Activated CD4-positive, alpha-beta memory T cell treated with anti-CD3 and anti-CD28 coated beads, Interleukin-2, amount 10 ng/mL, durations not matched to agents 7 days and 5 days (primary cell): ENCODE measurements at regions of chr11 and their contacts with region 1.

Region 1: GRCh38 chr11:35138943-35139721 is at the start of gene CD44:
- DNase-seq: peak; percentile 75
- H3K4me3 Mint-ChIP-seq: peak within 1 kb of the TSS; percentile 97
- H3K27ac Mint-ChIP-seq: peak within 1 kb of the TSS; percentile 90
- H3K4me1 Mint-ChIP-seq: peaks cover 45% of the 10 kb centered on the region
- H3K27me3 Mint-ChIP-seq: peaks cover 10% of the 10 kb centered on the region
- total RNA-seq, gene CD44: 634 to 645 TPM

Region 2: GRCh38 chr11:34997952-34998528 is 141.1 kb before region 1 on chr11:
- CTCF ChIA-PET with region 1: interaction called, 3 read pairs
- POLR2A ChIA-PET with region 1: interaction called, 15 read pairs
- DNase-seq: no peak
- H3K4me3 Mint-ChIP-seq: no peak overlapping the region
- H3K27ac Mint-ChIP-seq: peak overlapping the region; percentile 37
- H3K4me1 Mint-ChIP-seq: peaks cover 25% of the 10 kb centered on the region
- H3K27me3 Mint-ChIP-seq: no peaks in the 10 kb centered on the region

Region 3: DNA sequence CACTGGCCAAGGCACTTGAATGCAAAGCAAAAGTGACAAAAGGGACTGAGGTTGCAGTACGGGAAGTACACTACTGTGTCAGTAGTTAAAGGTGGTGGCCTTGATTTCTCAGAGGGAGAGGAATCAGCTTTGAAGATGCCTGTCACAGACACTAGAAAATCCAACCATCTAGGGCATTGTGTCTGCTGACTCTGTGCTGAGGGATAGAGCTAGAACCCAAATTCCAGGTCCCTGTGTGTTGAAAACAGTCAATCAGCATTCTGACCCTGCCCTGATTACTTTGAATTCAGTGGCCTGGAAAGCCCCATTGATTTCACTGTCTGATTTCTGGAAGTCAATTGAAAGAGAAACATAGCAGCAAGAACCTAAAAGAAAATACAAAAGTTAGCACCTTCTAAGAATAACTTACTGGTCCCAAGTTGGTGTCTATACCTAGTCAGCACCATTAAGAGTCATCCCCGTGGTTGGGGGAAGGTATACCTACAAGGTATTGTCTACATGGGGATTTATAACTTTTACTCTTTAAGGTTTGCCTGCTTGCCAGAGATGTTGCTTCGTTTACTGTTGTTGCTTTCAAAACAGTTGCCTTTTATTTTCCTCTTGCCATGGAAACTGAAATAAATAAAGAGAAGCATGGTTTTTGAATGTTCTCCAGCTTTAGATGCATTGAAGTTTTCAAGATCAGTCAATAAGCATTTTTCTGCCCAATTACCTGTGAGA is 125.5 kb before region 1 on chr11:
- CTCF ChIA-PET with region 1: interaction called, 3 read pairs
- POLR2A ChIA-PET with region 1: interaction called, 17 read pairs
- DNase-seq: peak; percentile 28
- H3K4me3 Mint-ChIP-seq: peak overlapping the region; percentile 59
- H3K27ac Mint-ChIP-seq: peak overlapping the region; percentile 84
- H3K4me1 Mint-ChIP-seq: peaks cover 38% of the 10 kb centered on the region
- H3K27me3 Mint-ChIP-seq: peaks cover 6% of the 10 kb centered on the region

Region 4: GRCh38 chr11:35040221-35040942 is 98.8 kb before region 1 on chr11:
- CTCF ChIA-PET with region 1: interaction called, 5 read pairs
- POLR2A ChIA-PET with region 1: interaction called, 36 read pairs
- DNase-seq: peak; percentile 74
- H3K4me3 Mint-ChIP-seq: peak overlapping the region; percentile 82
- H3K27ac Mint-ChIP-seq: peak overlapping the region; percentile 99
- H3K4me1 Mint-ChIP-seq: peaks cover 75% of the 10 kb centered on the region
- H3K27me3 Mint-ChIP-seq: peaks cover 13% of the 10 kb centered on the region

Region 5: GRCh38 chr11:35082321-35083182 is 56.6 kb before region 1 on chr11:
- CTCF ChIA-PET with region 1: interaction called, 10 read pairs
- POLR2A ChIA-PET with region 1: interaction called, 50 read pairs
- DNase-seq: peak; percentile 92
- H3K4me3 Mint-ChIP-seq: peak overlapping the region; percentile 77
- H3K27ac Mint-ChIP-seq: peak overlapping the region; percentile 91
- H3K4me1 Mint-ChIP-seq: peaks cover 84% of the 10 kb centered on the region
- H3K27me3 Mint-ChIP-seq: no peaks in the 10 kb centered on the region

Region 6: DNA sequence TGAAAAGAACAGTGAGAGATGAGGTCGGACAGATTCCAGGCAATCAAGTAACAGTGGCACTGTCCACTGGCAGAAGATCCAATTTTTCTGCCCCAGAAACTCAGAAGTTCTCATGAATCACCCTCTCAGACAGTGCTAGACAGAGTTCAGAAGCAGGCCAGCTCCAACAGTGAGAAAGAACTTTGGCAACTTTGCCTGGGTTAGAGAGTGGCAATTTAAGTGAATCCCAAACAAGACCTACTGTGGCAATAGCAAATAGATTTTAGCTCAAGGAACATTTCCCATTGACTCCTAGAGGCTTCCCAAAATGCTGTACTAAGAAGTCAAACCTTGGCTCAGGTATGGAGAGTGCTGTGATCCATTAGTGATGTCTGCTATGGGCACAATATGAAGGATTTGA is 12.1 kb after region 1 on chr11:
- CTCF ChIA-PET with region 1: no interaction called
- POLR2A ChIA-PET with region 1: interaction called, 634 read pairs
- DNase-seq: no peak
- H3K4me3 Mint-ChIP-seq: no peak overlapping the region
- H3K27ac Mint-ChIP-seq: peak overlapping the region; percentile 41
- H3K4me1 Mint-ChIP-seq: peaks cover 93% of the 10 kb centered on the region
- H3K27me3 Mint-ChIP-seq: no peaks in the 10 kb centered on the region

Region 7: DNA sequence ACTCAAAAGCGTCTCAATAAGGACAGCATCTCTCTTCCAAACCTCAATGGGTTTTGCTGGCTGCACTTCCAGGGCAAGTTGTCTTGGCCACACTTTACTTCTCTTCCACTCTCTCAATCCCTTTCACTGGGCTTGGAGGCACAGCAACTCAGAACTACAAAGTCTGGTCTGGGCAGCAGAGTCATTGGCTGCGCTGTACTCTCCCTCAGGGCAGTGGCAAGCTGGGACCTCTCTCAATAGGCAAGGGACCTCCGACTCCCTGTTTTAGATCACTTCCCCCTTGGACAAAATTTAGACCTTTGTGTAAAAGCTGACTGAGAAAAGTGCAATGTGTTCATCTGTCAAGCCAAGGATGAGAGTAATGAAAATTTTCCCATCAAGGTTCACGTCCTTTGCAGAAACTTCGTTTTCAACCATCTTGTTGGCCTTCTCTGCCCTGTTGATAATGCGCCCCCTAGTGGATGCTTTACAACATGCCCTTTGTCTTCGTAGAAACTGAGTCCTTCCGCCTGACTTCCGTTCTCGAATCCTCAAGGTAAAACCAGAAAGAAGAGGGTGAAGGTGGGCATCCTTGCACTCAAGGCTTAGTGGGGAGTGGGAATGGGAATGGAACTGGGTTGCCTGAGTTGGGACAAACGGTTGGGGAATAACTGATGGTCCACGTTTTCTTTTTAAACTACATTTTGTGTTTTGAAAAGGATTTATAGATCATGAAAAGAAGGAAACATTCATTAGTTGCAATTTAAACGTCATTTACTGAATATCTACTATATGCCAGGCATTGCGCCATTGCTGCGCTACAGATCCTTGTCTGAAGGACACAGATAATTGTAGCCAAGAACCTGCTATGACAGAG is 99.0 kb after region 1 on chr11:
- CTCF ChIA-PET with region 1: interaction called, 3 read pairs
- POLR2A ChIA-PET with region 1: interaction called, 15 read pairs
- DNase-seq: peak; percentile 59
- H3K4me3 Mint-ChIP-seq: no peak overlapping the region
- H3K27ac Mint-ChIP-seq: peak overlapping the region; percentile 36
- H3K4me1 Mint-ChIP-seq: peaks cover 81% of the 10 kb centered on the region
- H3K27me3 Mint-ChIP-seq: peaks cover 2% of the 10 kb centered on the region